PC-9 (cell line): ENCODE measurements at regions of chr12 and their contacts with region 1.

Region 1: GRCh38 chr12:10613349-10614055 is at the start of gene MAGOHB:
- DNase-seq: peak; percentile 86 to 97
- H3K4me3 ChIP-seq: peak within 1 kb of the TSS; percentile 90
- H3K27ac ChIP-seq: peak within 1 kb of the TSS; percentile 85
- H3K4me1 ChIP-seq: peaks cover 29% of the 10 kb centered on the region
- H3K27me3 ChIP-seq: no peaks in the 10 kb centered on the region
- CTCF ChIP-seq: no peak
- total RNA-seq, gene MAGOHB: 53.8 and 91.4 TPM in 2 replicates

Region 2: GRCh38 chr12:10554228-10554755 is 59.2 kb before region 1 on chr12:
- CTCF ChIA-PET with region 1: no interaction called
- POLR2A ChIA-PET with region 1: no interaction called
- intact Hi-C with region 1: no loop called
- DNase-seq: no peak
- H3K4me3 ChIP-seq: no peak overlapping the region
- H3K27ac ChIP-seq: no peak overlapping the region
- H3K4me1 ChIP-seq: no peaks in the 10 kb centered on the region
- H3K27me3 ChIP-seq: no peaks in the 10 kb centered on the region
- CTCF ChIP-seq: no peak

Region 3: DNA sequence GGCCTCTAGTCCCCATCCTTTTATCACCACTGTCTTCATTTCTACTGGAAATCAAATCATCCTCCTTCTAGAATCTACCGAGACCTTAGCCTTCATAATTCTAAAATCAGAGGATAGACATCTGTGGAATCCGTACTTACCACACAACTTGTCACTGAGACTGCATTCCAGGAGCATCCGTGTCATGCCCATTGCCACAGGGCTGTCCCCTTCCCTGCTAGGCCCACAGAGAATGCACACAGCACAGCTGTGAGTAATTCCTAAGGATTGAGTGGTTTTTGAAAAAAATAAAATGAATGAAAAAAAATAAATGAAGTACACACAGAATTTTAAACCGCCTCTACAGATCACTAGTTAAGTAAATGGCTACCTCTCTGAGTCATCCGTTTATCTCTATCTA is 20.9 kb after region 1 on chr12:
- CTCF ChIA-PET with region 1: no interaction called
- POLR2A ChIA-PET with region 1: interaction called, 3 read pairs
- intact Hi-C with region 1: loop called (anchors 1 kb)
- DNase-seq: peak; percentile 86 to 89
- H3K4me3 ChIP-seq: no peak overlapping the region
- H3K27ac ChIP-seq: peak overlapping the region; percentile 35
- H3K4me1 ChIP-seq: peaks cover 36% of the 10 kb centered on the region
- H3K27me3 ChIP-seq: no peaks in the 10 kb centered on the region
- CTCF ChIP-seq: no peak

Region 4: DNA sequence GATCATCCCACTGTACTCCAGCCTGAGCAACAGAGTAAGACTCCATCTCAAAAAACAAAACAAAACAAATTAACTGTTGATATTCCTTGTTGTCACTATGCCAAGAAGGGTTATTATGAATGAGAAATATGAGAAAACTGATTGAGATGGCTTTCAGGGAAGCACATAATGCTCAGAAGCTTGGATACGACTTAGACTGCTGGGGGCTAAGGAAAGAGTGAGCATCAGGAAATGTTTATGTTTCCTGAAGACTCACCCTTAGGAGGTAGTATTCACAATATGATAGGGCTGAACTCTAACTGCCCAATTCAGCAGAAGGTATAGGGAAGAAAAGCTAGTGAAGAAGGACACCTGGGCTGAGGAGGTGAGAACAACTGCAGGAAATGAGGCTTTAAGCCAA is 54.1 kb after region 1 on chr12:
- CTCF ChIA-PET with region 1: interaction called, 12 read pairs
- POLR2A ChIA-PET with region 1: interaction called, 6 read pairs
- intact Hi-C with region 1: no loop called
- DNase-seq: no peak
- H3K4me3 ChIP-seq: no peak overlapping the region
- H3K27ac ChIP-seq: no peak overlapping the region
- H3K4me1 ChIP-seq: peaks cover 11% of the 10 kb centered on the region; the same call in 1 of the 2 replicates
- H3K27me3 ChIP-seq: no peaks in the 10 kb centered on the region
- CTCF ChIP-seq: no peak

Region 5: DNA sequence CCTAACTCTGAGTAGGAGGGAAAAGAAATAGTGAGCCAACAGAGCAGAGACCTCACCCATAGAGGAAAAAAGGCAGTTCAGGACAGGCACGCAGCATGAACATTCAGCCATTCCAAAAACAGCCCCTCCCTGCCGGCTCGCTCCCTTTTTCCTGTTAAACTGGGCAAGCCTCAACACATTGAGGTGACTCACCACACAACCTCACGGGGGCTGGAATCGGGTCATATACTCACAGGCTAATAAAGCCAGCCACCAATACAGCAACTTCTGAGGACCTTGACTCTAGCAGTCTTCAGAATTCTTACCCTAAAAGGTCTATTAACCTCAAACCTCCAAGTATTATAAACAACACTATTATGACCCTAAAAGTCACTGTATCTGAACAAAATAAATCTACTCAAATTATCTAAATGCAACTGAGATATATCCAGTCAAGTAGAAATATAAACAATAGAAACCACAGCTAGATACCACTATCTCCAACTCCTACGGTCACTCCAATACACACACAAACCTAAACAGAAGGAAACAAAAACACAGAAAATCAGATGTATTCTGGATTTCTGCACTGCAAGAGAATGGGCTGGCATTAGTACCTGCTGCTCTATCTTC is 103.3 kb after region 1 on chr12:
- CTCF ChIA-PET with region 1: no interaction called
- POLR2A ChIA-PET with region 1: no interaction called
- intact Hi-C with region 1: loop called (anchors 1 kb)
- DNase-seq: peak; percentile 88 to 94
- H3K4me3 ChIP-seq: peak overlapping the region; percentile 42; the same call in 1 of the 2 replicates
- H3K27ac ChIP-seq: peak overlapping the region; percentile 78
- H3K4me1 ChIP-seq: peaks cover 57% of the 10 kb centered on the region
- H3K27me3 ChIP-seq: no peaks in the 10 kb centered on the region
- CTCF ChIP-seq: no peak